Mammary epithelial cell (primary cell): ENCODE measurements at regions of chr3 and their contacts with region 1.

Region 1: DNA sequence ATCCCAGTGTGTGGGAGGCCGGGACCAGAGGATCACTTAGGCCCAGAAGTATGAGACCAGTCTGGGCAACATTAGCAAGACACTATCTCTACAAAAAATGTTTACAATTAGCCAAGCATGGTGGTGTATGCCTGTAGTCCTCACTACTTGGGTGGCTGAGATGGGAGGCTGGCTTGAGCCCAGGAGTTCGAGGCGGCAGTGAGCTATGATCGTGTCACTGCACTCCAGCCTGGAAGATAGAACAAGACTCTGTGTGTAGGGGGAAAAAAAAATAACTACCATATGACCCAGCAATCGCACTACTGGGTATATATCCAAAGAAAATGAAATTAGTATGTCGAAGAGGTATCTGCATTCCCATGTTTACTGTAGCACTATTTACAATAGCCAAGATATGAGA is 22.6 kb downstream of the RYK start:
- DNase-seq: no peak
- H3K4me3 ChIP-seq: no peak overlapping the region
- H3K27ac ChIP-seq: no peak overlapping the region
- H3K4me1 ChIP-seq: peaks cover 29% of the 10 kb centered on the region
- H3K27me3 ChIP-seq: no peaks in the 10 kb centered on the region
- CTCF ChIP-seq: no peak

Region 2: DNA sequence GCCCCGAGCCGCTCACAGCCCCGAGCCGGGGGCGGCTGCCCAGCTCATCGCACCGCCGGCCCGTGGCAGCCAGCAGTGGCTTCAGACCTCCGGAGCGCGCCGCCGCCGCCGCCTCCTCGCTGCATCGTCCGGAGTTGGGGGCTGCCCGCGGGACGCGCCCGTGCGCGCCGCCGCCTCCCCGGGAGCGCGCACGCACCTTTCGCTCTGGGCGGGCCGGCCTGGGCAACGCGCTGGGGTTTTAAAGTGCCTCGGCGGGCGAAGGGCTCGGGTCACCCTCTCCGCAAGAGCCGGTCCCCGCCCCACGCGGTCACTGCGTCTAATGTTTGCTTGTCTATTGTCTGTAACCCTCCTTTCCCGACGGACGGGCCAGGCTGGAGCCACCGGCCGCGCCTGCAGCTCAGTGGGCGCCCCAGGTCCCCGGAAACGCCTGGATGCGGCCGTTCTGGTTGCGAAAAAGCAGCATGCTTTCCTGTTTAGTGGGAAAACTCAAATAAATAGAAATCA is 22.7 kb after region 1 on chr3 and contains the start of gene RYK:
- CTCF ChIA-PET with region 1: no interaction called
- dilution Hi-C with region 1: no loop called
- in situ Hi-C with region 1: no loop called
- intact Hi-C with region 1: loop called (anchors 2 kb)
- DNase-seq: peak; percentile 78
- H3K4me3 ChIP-seq: peak within 1 kb of the TSS; percentile 62 to 76 (median 75)
- H3K27ac ChIP-seq: peak within 1 kb of the TSS; percentile 36
- H3K4me1 ChIP-seq: peaks cover 15% of the 10 kb centered on the region
- H3K27me3 ChIP-seq: no peaks in the 10 kb centered on the region
- CTCF ChIP-seq: no peak
- total RNA-seq, gene RYK: 76.3 to 171 TPM